Motor neuron (in vitro differentiated cells): ENCODE measurements at regions of chr1 and their contacts with region 1.

Region 1: DNA sequence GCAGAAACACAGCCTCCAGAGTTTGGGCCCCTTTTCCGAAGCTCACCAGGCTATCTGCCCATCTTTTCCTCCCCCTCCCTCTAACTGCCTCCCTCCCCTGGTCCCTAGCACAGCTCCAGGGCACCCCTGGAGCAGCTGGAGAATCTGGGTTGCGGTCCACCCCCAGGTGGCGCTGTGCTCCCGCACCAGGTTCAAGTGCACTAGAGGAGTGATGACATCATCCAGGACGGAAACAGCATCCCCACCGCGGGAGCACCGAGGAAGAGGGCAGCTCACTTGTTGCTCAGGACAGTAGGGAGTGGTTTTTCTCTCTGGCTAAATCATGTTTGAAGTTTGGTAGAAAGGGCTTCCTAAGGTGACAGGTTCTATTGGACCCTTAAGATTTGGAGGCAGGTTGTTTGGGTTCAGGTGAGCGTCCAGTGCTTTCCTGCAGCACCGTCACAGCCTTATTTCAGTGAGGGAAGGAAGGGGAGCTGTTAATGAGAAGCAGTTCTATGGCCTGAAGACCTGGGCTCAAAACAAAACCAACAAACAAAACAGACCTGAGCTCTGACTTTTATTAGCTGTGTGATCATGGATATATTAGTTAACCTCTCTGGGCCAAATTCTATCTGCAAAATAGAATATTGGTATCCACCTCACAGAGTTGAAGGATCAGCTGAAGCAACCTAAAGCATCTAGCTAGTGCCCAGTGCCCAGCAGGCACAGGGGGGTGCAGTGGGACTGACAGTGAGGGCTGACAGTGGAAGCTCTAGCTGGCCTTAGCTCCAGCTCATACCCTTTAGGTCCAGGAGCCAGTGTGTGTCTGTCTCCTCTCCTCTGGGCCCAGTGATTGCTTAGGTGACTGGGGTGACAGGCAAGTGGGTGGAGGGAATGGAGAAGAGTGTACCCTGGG is 7.5 kb downstream of the SHISA4 start:
- ATAC-seq: peak; percentile 94 to 100 (median 96)
- H3K4me3 ChIP-seq: no peak overlapping the region
- H3K27ac ChIP-seq: no peak overlapping the region
- H3K4me1 ChIP-seq: peaks cover 0 to 3% of the 10 kb centered on the region in 2 donors

Region 2: GRCh38 chr1:201970334-201971159 is 74.4 kb after region 1 on chr1:
- in situ Hi-C with region 1: loop called in 2 of 9 experiments (anchors 5 to 25 kb)
- ATAC-seq: peak in 2 of 8 experiments; percentile 26 to 42
- H3K4me3 ChIP-seq: no peak overlapping the region
- H3K27ac ChIP-seq: no peak overlapping the region
- H3K4me1 ChIP-seq: no peaks in the 10 kb centered on the region

Region 3: GRCh38 chr1:201982623-201983379 is 86.6 kb after region 1 on chr1 and contains the start of gene RNPEP:
- in situ Hi-C with region 1: loop called in 1 of 9 experiments (anchors 25 kb)
- ATAC-seq: peak; percentile 77 to 86 (median 82)
- H3K4me3 ChIP-seq: peak within 1 kb of the TSS; percentile 62 to 91 (median 83)
- H3K27ac ChIP-seq: peak within 1 kb of the TSS; percentile 85 to 90
- H3K4me1 ChIP-seq: peaks cover 6 to 11% of the 10 kb centered on the region in 2 donors
- total RNA-seq, gene RNPEP: 33.6 to 137 (median 44.4) TPM

Region 4: DNA sequence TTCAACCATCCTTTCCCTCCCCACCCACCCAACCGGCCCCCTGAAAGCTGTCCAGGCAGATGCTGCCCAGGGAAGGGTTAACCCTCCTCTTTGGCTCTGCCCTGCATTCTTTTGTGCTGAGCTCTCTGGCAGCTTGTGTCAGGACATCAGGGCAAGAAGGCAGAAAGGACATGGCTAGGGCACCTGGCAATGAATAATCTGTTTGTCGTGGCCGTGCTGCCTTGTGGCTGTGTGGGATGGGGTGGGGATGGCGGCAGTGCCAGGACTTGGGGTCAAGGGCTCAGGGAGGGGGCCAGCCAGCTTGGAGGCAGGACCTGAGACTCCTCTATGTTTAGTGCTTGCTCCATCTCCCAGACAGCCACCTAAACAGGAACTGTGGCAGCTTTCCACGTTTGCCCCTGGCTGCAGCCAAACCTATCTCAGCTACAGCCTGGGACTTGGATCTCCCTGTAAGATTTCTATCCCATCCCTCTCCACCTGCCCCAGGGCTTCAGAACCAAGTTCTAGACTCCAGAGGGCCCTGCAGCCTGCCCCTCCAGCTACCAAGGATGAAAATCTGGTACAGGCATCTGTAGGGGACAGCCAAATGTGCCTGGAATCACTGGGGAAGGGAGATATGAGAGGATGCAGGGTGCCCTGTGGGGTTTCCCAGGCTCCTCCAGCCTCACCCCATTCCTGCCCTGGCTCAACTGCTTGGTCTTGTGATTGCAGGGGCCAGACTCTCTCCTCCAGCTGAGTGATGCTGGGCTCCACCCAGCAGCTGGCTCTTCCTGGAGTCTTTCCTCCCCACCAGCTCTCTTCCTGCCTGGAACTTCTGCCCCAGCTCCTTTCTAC is 216.9 kb after region 1 on chr1:
- in situ Hi-C with region 1: loop called in 2 of 9 experiments (anchors 10 to 25 kb)
- ATAC-seq: peak; percentile 36 to 95 (median 64)
- H3K4me3 ChIP-seq: no peak overlapping the region
- H3K27ac ChIP-seq: no peak overlapping the region
- H3K4me1 ChIP-seq: peaks cover 16 to 17% of the 10 kb centered on the region in 2 donors

Region 5: GRCh38 chr1:202122639-202123335 is 226.6 kb after region 1 on chr1 and contains the start of gene GPR37L1:
- in situ Hi-C with region 1: loop called in 6 of 9 experiments (anchors 10 to 25 kb)
- ATAC-seq: peak; percentile 54 to 97 (median 96)
- H3K4me3 ChIP-seq: no peak within 1 kb of the TSS
- H3K27ac ChIP-seq: peak within 1 kb of the TSS in 1 of 2 donors; percentile 35
- H3K4me1 ChIP-seq: peaks cover 5 to 24% of the 10 kb centered on the region in 2 donors
- total RNA-seq, gene GPR37L1: 0.27 to 9.8 (median 0.64) TPM

Region 6: DNA sequence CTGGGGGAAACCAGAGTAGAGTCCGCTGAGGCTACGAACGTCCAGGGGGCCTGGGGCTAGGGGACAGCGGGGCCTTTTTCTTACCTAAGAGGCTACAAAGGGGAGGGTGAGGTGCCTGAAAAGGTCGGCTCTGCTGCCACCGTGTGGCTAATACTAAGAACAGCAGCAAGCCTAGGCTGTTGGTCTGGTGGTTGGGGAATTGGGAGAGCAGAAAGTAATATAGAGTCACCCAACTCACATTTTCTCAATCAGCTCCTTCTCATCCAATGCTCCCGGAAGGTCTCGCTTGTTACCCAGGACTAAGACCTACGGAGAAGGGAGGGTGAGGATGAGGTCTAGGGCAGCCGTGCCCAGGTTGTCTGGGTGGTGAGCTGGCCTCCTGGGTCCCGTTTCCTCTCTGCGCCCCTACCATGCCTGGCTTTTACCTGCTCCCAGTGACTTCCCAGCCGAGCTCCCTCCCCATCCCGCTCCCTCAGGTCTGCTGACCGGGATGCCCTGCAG is 239.1 kb after region 1 on chr1:
- in situ Hi-C with region 1: loop called in 4 of 9 experiments (anchors 25 kb)
- ATAC-seq: peak; percentile 31 to 93 (median 67)
- H3K4me3 ChIP-seq: no peak overlapping the region
- H3K27ac ChIP-seq: no peak overlapping the region
- H3K4me1 ChIP-seq: peaks cover 11 to 29% of the 10 kb centered on the region in 2 donors